Activated CD4-positive, alpha-beta memory T cell treated with anti-CD3 and anti-CD28 coated beads for 36 hours (primary cell): ENCODE measurements at regions of chr20 and their contacts with region 1.

Region 1: GRCh38 chr20:63635431-63636141 is 8.7 kb upstream of the GMEB2 start:
- DNase-seq: peak; percentile 90
- H3K4me3 Mint-ChIP-seq: peak overlapping the region; percentile 60
- H3K27ac Mint-ChIP-seq: peak overlapping the region; percentile 93
- H3K4me1 Mint-ChIP-seq: peaks cover 55% of the 10 kb centered on the region
- H3K27me3 Mint-ChIP-seq: no peaks in the 10 kb centered on the region

Region 2: GRCh38 chr20:63475206-63475605 is 160.4 kb before region 1 on chr20:
- CTCF ChIA-PET with region 1: no interaction called
- POLR2A ChIA-PET with region 1: no interaction called
- intact Hi-C with region 1: no loop called
- DNase-seq: peak; percentile 22
- H3K4me3 Mint-ChIP-seq: no peak overlapping the region
- H3K27ac Mint-ChIP-seq: no peak overlapping the region
- H3K4me1 Mint-ChIP-seq: peaks cover 5% of the 10 kb centered on the region
- H3K27me3 Mint-ChIP-seq: peaks cover 45% of the 10 kb centered on the region

Region 3: DNA sequence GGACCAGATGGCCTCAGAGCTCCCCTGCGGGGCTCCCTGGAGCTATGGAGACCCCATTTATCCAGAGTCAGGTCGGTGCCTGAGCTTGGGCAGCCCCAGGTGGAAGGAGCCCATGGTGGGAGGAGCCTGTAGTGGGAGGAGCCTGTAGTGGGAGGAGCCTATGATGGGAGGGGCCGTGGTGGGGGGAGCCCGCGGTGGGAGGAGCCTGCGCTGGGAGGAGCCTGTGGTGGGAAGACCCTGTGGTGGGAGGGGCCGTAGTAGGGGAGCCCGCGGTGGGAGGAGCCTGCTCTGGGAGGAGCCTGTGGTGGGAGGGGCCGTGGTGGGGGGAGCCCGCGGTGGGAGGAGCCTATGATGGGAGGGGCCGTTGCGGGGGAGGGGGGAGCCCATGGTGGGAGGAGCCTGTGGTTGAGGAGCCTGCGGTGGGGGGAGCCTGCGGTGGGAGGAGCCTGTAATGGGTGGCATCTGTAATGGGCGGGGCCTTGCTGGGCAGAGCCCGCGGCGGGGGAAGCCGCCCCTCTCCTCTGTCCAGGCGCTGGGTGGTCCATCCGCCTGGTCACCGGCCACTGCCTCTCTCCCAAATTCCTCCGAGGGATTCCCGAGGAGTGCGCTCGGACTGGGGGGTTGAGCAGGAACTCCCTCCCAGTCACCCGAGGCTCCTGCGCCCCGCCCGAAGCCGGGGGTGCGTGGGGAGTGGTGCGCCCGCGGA is 82.2 kb before region 1 on chr20:
- CTCF ChIA-PET with region 1: no interaction called
- POLR2A ChIA-PET with region 1: no interaction called
- intact Hi-C with region 1: loop called (anchors 2 kb)
- DNase-seq: peak; percentile 94
- H3K4me3 Mint-ChIP-seq: peak overlapping the region; percentile 39
- H3K27ac Mint-ChIP-seq: no peak overlapping the region
- H3K4me1 Mint-ChIP-seq: peaks cover 11% of the 10 kb centered on the region
- H3K27me3 Mint-ChIP-seq: peaks cover 6% of the 10 kb centered on the region

Region 4: DNA sequence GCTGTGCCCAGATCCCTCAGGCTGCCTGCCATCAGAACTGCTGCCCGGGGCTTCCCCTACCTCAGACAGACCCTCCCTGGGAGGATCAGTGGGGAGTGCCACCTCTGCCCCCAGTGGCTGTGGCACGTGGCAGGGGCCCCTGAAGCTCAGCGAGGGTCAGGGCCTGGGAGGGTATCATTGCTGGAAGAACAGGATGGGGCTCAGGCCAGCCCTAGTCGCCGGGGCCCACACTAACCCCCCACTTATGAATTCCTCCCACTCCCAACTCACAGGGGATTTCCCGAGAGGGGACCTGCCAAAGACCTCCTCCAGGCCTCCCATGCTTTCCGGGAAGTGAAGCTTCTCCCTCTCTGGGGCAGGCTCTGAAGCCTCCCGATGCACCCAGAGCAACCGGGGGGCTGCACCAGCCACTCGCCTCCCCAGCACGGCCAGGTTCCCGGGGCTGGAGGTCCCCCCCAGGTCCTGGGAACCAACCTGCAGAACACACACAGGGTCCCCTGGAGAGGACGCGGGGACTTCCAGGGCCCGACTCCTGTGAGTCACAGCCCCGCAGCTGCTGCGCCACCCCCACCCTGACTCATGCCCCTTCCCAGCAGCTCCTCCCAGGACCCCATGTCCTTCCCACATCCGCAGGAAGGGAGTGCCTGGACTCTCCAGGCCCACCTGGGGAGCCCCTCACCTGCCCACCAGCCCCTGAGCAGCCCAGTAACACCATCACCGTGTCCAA is 63.3 kb after region 1 on chr20:
- CTCF ChIA-PET with region 1: no interaction called
- POLR2A ChIA-PET with region 1: no interaction called
- intact Hi-C with region 1: loop called (anchors 5 kb)
- DNase-seq: peak; percentile 88
- H3K4me3 Mint-ChIP-seq: peak overlapping the region; percentile 39
- H3K27ac Mint-ChIP-seq: peak overlapping the region; percentile 92
- H3K4me1 Mint-ChIP-seq: peaks cover 41% of the 10 kb centered on the region
- H3K27me3 Mint-ChIP-seq: no peaks in the 10 kb centered on the region

Region 5: DNA sequence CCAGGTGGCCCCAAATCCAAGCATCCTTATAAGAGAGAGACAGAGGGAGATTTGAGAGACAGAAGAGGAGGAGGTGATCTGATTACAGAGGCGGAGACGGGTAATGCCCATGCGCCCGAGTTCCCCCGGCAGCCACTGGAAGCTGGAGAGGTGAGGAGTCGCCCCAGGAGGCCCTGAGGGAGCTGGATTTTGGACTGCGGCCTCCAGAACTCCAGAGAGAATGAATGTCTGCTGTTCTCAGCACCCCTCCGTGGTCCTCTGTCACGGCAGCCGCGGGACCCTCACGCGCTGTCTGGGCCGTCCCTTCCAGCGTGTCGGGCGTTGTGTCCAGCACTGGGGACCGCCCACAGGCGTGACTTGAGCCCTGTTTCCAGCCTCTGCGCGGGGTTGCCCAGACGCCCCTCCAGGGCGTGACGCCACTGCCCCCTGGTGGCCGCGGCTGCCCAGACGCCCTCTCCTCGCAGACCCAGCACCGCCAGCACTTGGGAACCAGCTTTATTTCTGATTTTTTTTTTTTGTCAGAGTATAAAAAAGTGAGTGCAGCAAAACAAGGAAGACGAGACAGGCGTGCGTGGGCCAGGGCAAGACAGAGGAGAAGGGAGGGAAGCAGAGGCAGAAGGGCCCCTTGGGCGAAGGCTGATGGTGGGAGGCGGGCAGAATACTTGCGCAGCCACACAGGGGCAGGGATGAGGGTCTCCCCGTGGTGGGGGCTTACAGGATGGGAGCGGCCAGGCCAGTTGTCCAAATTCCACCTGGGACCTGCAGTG is 338.2 kb after region 1 on chr20:
- CTCF ChIA-PET with region 1: no interaction called
- POLR2A ChIA-PET with region 1: no interaction called
- intact Hi-C with region 1: loop called (anchors 10 kb)
- DNase-seq: peak; percentile 83
- H3K4me3 Mint-ChIP-seq: no peak overlapping the region
- H3K27ac Mint-ChIP-seq: peak overlapping the region; percentile 31
- H3K4me1 Mint-ChIP-seq: peaks cover 37% of the 10 kb centered on the region
- H3K27me3 Mint-ChIP-seq: no peaks in the 10 kb centered on the region